ENCODE measurements at regions of chr2 and their contacts with region 1.

Region 1: DNA sequence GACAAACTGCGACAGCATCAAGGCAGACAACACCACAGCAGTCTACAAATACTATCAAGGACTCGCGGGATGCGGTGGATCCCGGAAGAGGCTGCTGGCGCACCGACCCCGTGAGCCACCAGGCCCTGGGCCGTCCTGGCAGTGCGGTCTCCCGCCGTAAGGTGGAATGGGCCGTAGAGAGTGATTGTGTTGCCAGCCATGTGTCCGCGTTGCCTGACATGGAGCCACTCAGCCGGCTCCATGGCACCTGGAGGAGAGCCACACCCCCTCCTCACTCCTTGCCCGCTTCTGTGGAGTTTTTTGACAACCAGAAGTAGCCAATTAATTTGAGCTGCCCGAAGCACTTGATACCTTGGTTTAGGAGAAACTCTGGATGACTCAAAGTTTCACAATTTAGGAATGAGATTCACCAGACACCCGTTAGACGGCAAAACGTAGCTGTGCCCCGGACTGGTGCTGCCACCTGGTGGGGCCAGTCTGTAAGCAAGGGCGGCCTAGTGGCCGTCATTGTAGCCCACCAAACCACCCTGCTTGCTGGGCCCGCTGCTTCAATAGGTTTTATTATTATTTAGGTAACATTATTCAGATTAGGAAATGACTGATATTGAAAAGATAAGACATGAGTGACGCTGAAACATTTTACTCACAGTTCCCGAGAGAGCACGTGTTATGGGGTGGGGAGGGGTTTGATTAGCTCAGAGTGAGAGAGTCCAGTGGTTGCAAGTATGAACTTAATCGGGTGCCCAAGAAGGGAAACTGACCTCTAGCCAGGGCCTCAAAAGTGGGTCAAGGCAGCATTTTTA is 10.2 kb upstream of the IMP4 start:
- DNase-seq: peak; percentile 45
- H3K4me3 Mint-ChIP-seq: peak overlapping the region; percentile 44
- H3K27ac Mint-ChIP-seq: no peak overlapping the region
- H3K4me1 Mint-ChIP-seq: peaks cover 5% of the 10 kb centered on the region
- H3K27me3 Mint-ChIP-seq: peaks cover 25% of the 10 kb centered on the region

Region 2: GRCh38 chr2:129877289-129877779 is 455.1 kb before region 1 on chr2:
- intact Hi-C with region 1: loop called (anchors 2 kb)
- DNase-seq: peak; percentile 53
- H3K4me3 Mint-ChIP-seq: peak overlapping the region; percentile 88
- H3K27ac Mint-ChIP-seq: peak overlapping the region; percentile 74
- H3K4me1 Mint-ChIP-seq: peaks cover 9% of the 10 kb centered on the region
- H3K27me3 Mint-ChIP-seq: peaks cover 4% of the 10 kb centered on the region

Region 3: GRCh38 chr2:130156624-130157004 is 175.9 kb before region 1 on chr2:
- intact Hi-C with region 1: loop called (anchors 1 kb)
- DNase-seq: no peak
- H3K4me3 Mint-ChIP-seq: no peak overlapping the region
- H3K27ac Mint-ChIP-seq: no peak overlapping the region
- H3K4me1 Mint-ChIP-seq: peaks cover 8% of the 10 kb centered on the region
- H3K27me3 Mint-ChIP-seq: no peaks in the 10 kb centered on the region

Region 4: GRCh38 chr2:130316596-130316995 is 15.9 kb before region 1 on chr2:
- intact Hi-C with region 1: no loop called
- DNase-seq: no peak
- H3K4me3 Mint-ChIP-seq: no peak overlapping the region
- H3K27ac Mint-ChIP-seq: no peak overlapping the region
- H3K4me1 Mint-ChIP-seq: no peaks in the 10 kb centered on the region
- H3K27me3 Mint-ChIP-seq: peaks cover 6% of the 10 kb centered on the region

Region 5: DNA sequence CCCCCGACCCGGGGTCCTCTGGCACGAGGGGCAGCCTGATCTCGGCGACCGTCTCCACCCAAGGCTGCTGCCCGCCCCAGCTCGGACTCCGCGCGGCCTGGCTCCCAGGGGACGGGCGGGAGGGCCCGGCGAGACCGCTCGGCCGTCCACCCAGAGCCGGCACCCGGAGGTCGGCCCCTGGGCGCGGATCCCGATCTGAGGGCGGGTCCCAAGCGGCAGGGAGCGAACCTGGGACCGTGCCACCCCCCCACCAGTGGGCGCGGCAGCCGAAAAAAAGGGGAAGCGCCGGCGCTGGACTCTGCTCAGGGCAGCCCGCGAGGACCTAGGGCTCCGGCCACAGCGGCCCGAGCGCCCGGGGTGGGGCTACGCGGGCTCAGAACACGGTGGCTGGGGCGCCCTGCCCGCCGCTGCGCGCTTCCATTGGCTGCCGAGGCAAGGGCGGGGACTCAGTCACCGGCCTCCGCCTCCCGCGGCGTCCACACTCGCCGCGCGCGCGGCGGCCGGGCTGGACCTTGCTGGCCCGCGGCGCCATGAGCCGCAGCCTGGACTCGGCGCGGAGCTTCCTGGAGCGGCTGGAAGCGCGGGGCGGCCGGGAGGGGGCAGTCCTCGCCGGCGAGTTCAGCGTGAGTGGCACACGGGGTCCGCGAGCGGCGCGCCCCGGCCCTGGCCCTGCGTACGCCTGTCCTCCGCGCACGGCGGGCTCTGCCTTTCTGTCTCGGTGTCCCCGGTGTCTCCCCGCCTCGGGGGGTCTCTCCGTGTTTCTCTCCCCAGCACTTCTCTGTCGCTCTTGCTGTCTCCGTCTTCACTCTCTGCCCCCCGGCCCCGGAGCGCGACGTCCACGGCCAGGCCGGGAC is 23.3 kb after region 1 on chr2 and contains the start of gene PTPN18:
- intact Hi-C with region 1: no loop called
- DNase-seq: peak; percentile 67
- H3K4me3 Mint-ChIP-seq: peak within 1 kb of the TSS; percentile 83
- H3K27ac Mint-ChIP-seq: peak within 1 kb of the TSS; percentile 52
- H3K4me1 Mint-ChIP-seq: peaks cover 25% of the 10 kb centered on the region
- H3K27me3 Mint-ChIP-seq: no peaks in the 10 kb centered on the region
- total RNA-seq, gene PTPN18: 66.9 and 68.9 TPM in 2 replicates